Naive thymus-derived CD4-positive, alpha-beta T cell (primary cell): ENCODE measurements at regions of chr15 and their contacts with region 1.

Region 1: DNA sequence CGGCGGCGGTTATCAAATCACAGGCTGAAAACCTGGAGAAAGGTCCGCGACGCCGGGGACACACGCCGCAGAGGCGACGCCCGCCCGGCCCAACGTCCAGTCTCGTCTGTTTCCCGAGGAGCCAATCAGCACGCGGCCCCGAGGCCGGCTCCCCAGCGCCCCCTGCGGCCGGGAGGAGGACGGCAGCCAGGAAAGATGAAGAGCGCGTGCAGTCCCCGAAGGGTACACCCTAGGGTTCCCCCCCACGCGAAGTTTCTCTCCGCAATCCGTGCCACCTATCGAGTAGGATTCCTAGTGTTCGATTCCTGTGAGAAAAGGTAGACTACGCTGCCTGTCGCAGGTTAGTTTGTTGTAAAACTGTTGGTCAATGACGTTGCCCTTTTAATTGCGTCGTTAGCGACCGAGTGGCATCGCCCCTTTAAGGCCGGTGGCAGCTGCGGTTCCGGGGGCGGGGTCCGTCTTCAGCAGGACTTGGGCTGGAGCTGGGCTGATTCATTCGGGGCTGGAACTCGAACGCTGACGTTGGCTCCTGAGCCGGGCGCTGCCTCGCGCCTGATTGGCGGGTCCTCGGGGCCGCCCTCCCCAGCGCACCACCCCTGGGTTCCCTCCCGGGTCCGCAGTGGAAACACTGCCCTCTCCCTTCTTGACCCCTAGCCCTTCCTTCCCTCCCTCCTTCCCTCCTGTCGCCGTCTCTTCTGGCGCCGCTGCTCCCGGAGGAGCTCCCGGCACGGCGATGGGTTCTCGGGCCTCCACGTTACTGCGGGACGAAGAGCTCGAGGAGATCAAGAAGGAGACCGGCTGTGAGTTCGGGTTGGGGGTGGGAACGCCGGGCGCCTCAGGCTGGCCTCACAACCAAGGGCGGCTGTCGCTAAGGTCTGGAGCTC is at the starts of genes CHP1 and EXD1:
- DNase-seq: peak; percentile 86 to 96 (median 90)
- ATAC-seq: peak; percentile 96
- H3K4me3 ChIP-seq: peak within 1 kb of the TSS; percentile 92
- H3K4me3 Mint-ChIP-seq: peak within 1 kb of the TSS; percentile 85 to 94 (median 91)
- H3K27ac ChIP-seq: peak within 1 kb of the TSS; percentile 82
- H3K27ac Mint-ChIP-seq: peak within 1 kb of the TSS; percentile 81 to 94 (median 92)
- H3K4me1 ChIP-seq: peaks cover 10 to 13% of the 10 kb centered on the region in 2 donors
- H3K4me1 Mint-ChIP-seq: peaks cover 17 to 36% (median 25%) of the 10 kb centered on the region in 7 donors
- H3K27me3 ChIP-seq: no peaks in the 10 kb centered on the region
- H3K27me3 Mint-ChIP-seq: peaks cover 0 to 11% (median 0%) of the 10 kb centered on the region in 5 donors
- total RNA-seq, gene CHP1: 20.2 to 70.6 (median 24.7) TPM
- total RNA-seq, gene EXD1: not detected

Region 2: GRCh38 chr15:40564591-40565332 is 666.1 kb before region 1 on chr15 and contains the start of gene CCDC32:
- CTCF ChIA-PET with region 1: no interaction called
- POLR2A ChIA-PET with region 1: no interaction called
- intact Hi-C with region 1: loop called in 1 of 2 experiments (anchors 1 kb)
- DNase-seq: peak; percentile 75 to 96 (median 93)
- ATAC-seq: peak; percentile 95
- H3K4me3 ChIP-seq: peak within 1 kb of the TSS; percentile 85
- H3K4me3 Mint-ChIP-seq: peak within 1 kb of the TSS; percentile 80 to 97 (median 96)
- H3K27ac ChIP-seq: peak within 1 kb of the TSS; percentile 96
- H3K27ac Mint-ChIP-seq: peak within 1 kb of the TSS; percentile 82 to 98 (median 95)
- H3K4me1 ChIP-seq: peaks cover 11 to 15% of the 10 kb centered on the region in 2 donors
- H3K4me1 Mint-ChIP-seq: peaks cover 35 to 57% (median 55%) of the 10 kb centered on the region in 7 donors
- H3K27me3 ChIP-seq: no peaks in the 10 kb centered on the region
- H3K27me3 Mint-ChIP-seq: peaks cover 0 to 8% (median 0%) of the 10 kb centered on the region in 5 donors
- total RNA-seq, gene CCDC32: 22.4 to 37.3 (median 33.3) TPM

Region 3: GRCh38 chr15:40807028-40807887 is 423.6 kb before region 1 on chr15 and contains the starts of genes DNAJC17 and ZFYVE19:
- CTCF ChIA-PET with region 1: no interaction called
- POLR2A ChIA-PET with region 1: no interaction called
- intact Hi-C with region 1: loop called (anchors 1 kb)
- DNase-seq: peak; percentile 86 to 96 (median 91)
- ATAC-seq: peak; percentile 99
- H3K4me3 ChIP-seq: peak within 1 kb of the TSS; percentile 99
- H3K4me3 Mint-ChIP-seq: peak within 1 kb of the TSS; percentile 92 to 98 (median 96)
- H3K27ac ChIP-seq: peak within 1 kb of the TSS; percentile 95
- H3K27ac Mint-ChIP-seq: peak within 1 kb of the TSS; percentile 84 to 98 (median 96)
- H3K4me1 ChIP-seq: peaks cover 14 to 16% of the 10 kb centered on the region in 2 donors
- H3K4me1 Mint-ChIP-seq: peaks cover 17 to 43% (median 25%) of the 10 kb centered on the region in 7 donors
- H3K27me3 ChIP-seq: no peaks in the 10 kb centered on the region
- H3K27me3 Mint-ChIP-seq: no peaks in the 10 kb centered on the region
- total RNA-seq, gene DNAJC17: 28.8 to 50.9 (median 36.7) TPM
- total RNA-seq, gene ZFYVE19: 17.9 to 31.9 (median 30.5) TPM

Region 4: GRCh38 chr15:41283653-41284426 is 52.9 kb after region 1 on chr15:
- CTCF ChIA-PET with region 1: interaction called, 3 read pairs
- POLR2A ChIA-PET with region 1: interaction called, 13 read pairs
- intact Hi-C with region 1: loop called (anchors 1 kb)
- DNase-seq: peak; percentile 94 to 98 (median 97)
- ATAC-seq: peak; percentile 98
- H3K4me3 ChIP-seq: peak overlapping the region; percentile 89
- H3K4me3 Mint-ChIP-seq: peak overlapping the region; percentile 90 to 100 (median 92)
- H3K27ac ChIP-seq: peak overlapping the region; percentile 91
- H3K27ac Mint-ChIP-seq: peak overlapping the region; percentile 96 to 99 (median 97)
- H3K4me1 ChIP-seq: peaks cover 21 to 31% of the 10 kb centered on the region in 2 donors
- H3K4me1 Mint-ChIP-seq: peaks cover 22 to 54% (median 51%) of the 10 kb centered on the region in 7 donors
- H3K27me3 ChIP-seq: no peaks in the 10 kb centered on the region
- H3K27me3 Mint-ChIP-seq: peaks cover 0 to 2% (median 0%) of the 10 kb centered on the region in 5 donors

Region 5: GRCh38 chr15:41416742-41417406 is 186.0 kb after region 1 on chr15 and contains the start of gene RTF1:
- CTCF ChIA-PET with region 1: no interaction called
- POLR2A ChIA-PET with region 1: interaction called, 3 read pairs
- intact Hi-C with region 1: loop called in 1 of 2 experiments (anchors 1 kb)
- DNase-seq: peak; percentile 92 to 100 (median 96)
- ATAC-seq: peak; percentile 99
- H3K4me3 ChIP-seq: peak within 1 kb of the TSS; percentile 98
- H3K4me3 Mint-ChIP-seq: peak within 1 kb of the TSS; percentile 86 to 96 (median 95)
- H3K27ac ChIP-seq: peak within 1 kb of the TSS; percentile 81
- H3K27ac Mint-ChIP-seq: peak within 1 kb of the TSS; percentile 74 to 98 (median 93)
- H3K4me1 ChIP-seq: peaks cover 6 to 16% of the 10 kb centered on the region in 2 donors
- H3K4me1 Mint-ChIP-seq: peaks cover 34 to 53% (median 43%) of the 10 kb centered on the region in 7 donors
- H3K27me3 ChIP-seq: no peaks in the 10 kb centered on the region
- H3K27me3 Mint-ChIP-seq: no peaks in the 10 kb centered on the region
- total RNA-seq, gene RTF1: 34.0 to 41.3 (median 37.2) TPM

Region 6: GRCh38 chr15:42495361-42496212 is 1264.7 kb after region 1 on chr15 and contains the start of gene SNAP23:
- CTCF ChIA-PET with region 1: no interaction called
- POLR2A ChIA-PET with region 1: no interaction called
- intact Hi-C with region 1: loop called in 1 of 2 experiments (anchors 5 kb)
- DNase-seq: peak; percentile 66 to 87 (median 80)
- ATAC-seq: peak; percentile 93
- H3K4me3 ChIP-seq: peak within 1 kb of the TSS; percentile 88
- H3K4me3 Mint-ChIP-seq: peak within 1 kb of the TSS; percentile 94 to 99 (median 97)
- H3K27ac ChIP-seq: peak within 1 kb of the TSS; percentile 79
- H3K27ac Mint-ChIP-seq: peak within 1 kb of the TSS; percentile 90 to 99 (median 96)
- H3K4me1 ChIP-seq: peaks cover 14 to 17% of the 10 kb centered on the region in 2 donors
- H3K4me1 Mint-ChIP-seq: peaks cover 43 to 92% (median 80%) of the 10 kb centered on the region in 7 donors
- H3K27me3 ChIP-seq: no peaks in the 10 kb centered on the region
- H3K27me3 Mint-ChIP-seq: peaks cover 0 to 2% (median 0%) of the 10 kb centered on the region in 5 donors
- total RNA-seq, gene SNAP23: 60.0 to 80.0 (median 70.6) TPM

Region 7: DNA sequence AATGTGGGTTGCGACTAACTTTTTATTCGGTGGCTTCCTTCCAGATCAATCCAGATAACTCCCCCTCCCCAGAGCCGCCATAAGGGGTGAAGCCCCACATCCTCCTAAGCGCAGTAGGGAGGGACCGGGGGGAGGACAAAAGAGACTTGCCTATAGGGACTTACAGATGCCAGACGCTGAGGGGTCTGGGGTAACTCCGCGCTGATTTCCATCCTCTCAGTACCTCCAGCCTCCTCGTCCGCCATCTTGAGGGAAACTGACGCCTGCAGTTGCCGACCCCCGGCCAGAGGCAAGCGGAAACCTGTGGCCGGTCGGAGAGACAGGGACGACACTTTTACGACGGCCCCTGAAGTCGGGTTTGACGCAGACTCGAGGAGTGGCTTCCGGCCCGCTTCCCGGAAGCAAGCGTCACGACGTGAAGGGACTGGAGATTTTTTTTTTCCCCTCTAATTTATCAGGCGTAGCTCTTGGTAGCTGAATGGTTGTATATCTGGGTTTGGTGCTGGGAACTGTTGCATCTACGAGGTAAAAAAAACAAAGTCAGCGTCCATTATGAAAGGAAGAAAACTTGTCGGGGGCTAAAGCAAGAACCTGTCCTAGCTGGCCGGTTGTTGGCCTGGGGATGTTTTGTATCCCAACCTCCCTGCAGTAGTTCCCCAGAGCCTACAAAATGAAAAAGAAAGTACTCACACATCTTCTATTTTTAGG is 1875.0 kb after region 1 on chr15 and contains the start of gene UBR1:
- CTCF ChIA-PET with region 1: no interaction called
- POLR2A ChIA-PET with region 1: no interaction called
- intact Hi-C with region 1: loop called in 1 of 2 experiments (anchors 10 kb)
- DNase-seq: peak; percentile 65 to 91 (median 89)
- ATAC-seq: peak; percentile 94
- H3K4me3 ChIP-seq: peak within 1 kb of the TSS; percentile 86
- H3K4me3 Mint-ChIP-seq: peak within 1 kb of the TSS; percentile 86 to 99 (median 95)
- H3K27ac ChIP-seq: peak within 1 kb of the TSS; percentile 99
- H3K27ac Mint-ChIP-seq: peak within 1 kb of the TSS; percentile 97 to 99 (median 98)
- H3K4me1 ChIP-seq: peaks cover 21 to 24% of the 10 kb centered on the region in 2 donors
- H3K4me1 Mint-ChIP-seq: peaks cover 40 to 56% (median 52%) of the 10 kb centered on the region in 7 donors
- H3K27me3 ChIP-seq: no peaks in the 10 kb centered on the region
- H3K27me3 Mint-ChIP-seq: peaks cover 0 to 5% (median 0%) of the 10 kb centered on the region in 5 donors
- total RNA-seq, gene UBR1: 38.4 to 51.7 (median 48.0) TPM